GM12878 (cell line): ENCODE measurements at regions of chr15 and their contacts with region 1.

Region 1: DNA sequence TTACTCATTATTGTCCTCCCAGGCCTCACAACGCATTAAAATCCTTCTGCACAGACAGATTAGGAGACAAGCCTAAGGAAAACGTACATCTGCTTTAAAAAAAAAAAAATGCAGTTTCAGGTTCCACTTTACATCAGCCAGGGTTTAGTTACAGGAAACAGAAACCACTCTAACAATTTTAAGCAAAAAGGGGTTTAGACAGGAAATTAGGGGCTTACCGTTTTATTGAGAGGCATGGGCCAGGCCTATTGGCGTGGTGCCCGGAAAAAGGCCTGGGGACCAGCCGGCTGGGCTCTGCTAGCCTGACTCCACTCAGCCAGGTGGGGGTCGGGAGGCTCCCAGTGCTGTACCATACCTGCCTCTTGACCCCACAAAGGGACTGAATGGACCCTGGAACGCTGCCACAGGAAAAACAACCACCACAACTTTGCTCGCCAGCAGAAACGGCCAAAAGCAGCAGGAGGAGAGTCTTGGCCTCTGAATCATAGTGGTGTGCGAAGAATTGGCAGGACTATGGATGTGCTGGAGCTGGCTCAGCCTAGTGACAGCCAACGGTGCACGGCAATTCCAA is 124.3 kb downstream of the CHSY1 start:
- DNase-seq: peak; percentile 82
- ATAC-seq: peak; percentile 80
- H3K4me3 ChIP-seq: peak overlapping the region; percentile 44; the same call in 1 of the 2 replicates
- H3K27ac ChIP-seq: peak overlapping the region; percentile 95
- H3K4me1 ChIP-seq: peaks cover 45% of the 10 kb centered on the region
- H3K27me3 ChIP-seq: no peaks in the 10 kb centered on the region; a peak in 1 of 4 replicates
- CTCF ChIP-seq: no peak
- EP300 ChIP-seq: peak; percentile 60 to 85; a peak in 2 of 4 replicates
- POLR2A ChIP-seq: no peak
- RAD21 ChIP-seq: no peak

Region 2: GRCh38 chr15:101138913-101139880 is 11.6 kb after region 1 on chr15:
- CTCF ChIA-PET with region 1: interaction called, 12 read pairs
- POLR2A ChIA-PET with region 1: interaction called, 9 read pairs
- RAD21 ChIA-PET with region 1: interaction called, 9 read pairs
- SMC1A ChIA-PET with region 1: interaction called, 41 read pairs
- in situ Hi-C with region 1: no loop called
- intact Hi-C with region 1: no loop called
- DNase-seq: peak; percentile 48
- ATAC-seq: peak; percentile 82
- H3K4me3 ChIP-seq: no peak overlapping the region
- H3K27ac ChIP-seq: peak overlapping the region; percentile 4; the same call in 1 of the 2 replicates
- H3K4me1 ChIP-seq: peaks cover 58% of the 10 kb centered on the region
- H3K27me3 ChIP-seq: no peaks in the 10 kb centered on the region
- CTCF ChIP-seq: no peak
- EP300 ChIP-seq: peak; percentile 71 to 76
- POLR2A ChIP-seq: no peak
- RAD21 ChIP-seq: no peak

Region 3: GRCh38 chr15:101156509-101157159 is 29.0 kb after region 1 on chr15:
- CTCF ChIA-PET with region 1: interaction called, 4 read pairs
- POLR2A ChIA-PET with region 1: interaction called, 4 read pairs
- RAD21 ChIA-PET with region 1: interaction called, 6 read pairs
- SMC1A ChIA-PET with region 1: interaction called, 21 read pairs
- in situ Hi-C with region 1: no loop called
- intact Hi-C with region 1: loop called (anchors 2 kb)
- DNase-seq: peak; percentile 84
- ATAC-seq: peak; percentile 86
- H3K4me3 ChIP-seq: no peak overlapping the region
- H3K27ac ChIP-seq: peak overlapping the region; percentile 53
- H3K4me1 ChIP-seq: peaks cover 17% of the 10 kb centered on the region
- H3K27me3 ChIP-seq: no peaks in the 10 kb centered on the region
- CTCF ChIP-seq: no peak
- EP300 ChIP-seq: peak; percentile 40 to 75; a peak in 2 of 4 replicates
- POLR2A ChIP-seq: no peak
- RAD21 ChIP-seq: no peak

Region 4: GRCh38 chr15:101201406-101202174 is 74.0 kb after region 1 on chr15:
- CTCF ChIA-PET with region 1: interaction called, 10 read pairs
- POLR2A ChIA-PET with region 1: interaction called, 3 read pairs
- RAD21 ChIA-PET with region 1: interaction called, 4 read pairs
- SMC1A ChIA-PET with region 1: interaction called, 14 read pairs
- in situ Hi-C with region 1: no loop called
- intact Hi-C with region 1: no loop called
- DNase-seq: no peak
- ATAC-seq: peak; percentile 7; the same call in 1 of the 3 replicates
- H3K4me3 ChIP-seq: no peak overlapping the region
- H3K27ac ChIP-seq: peak overlapping the region; percentile 31; the same call in 1 of the 2 replicates
- H3K4me1 ChIP-seq: peaks cover 48% of the 10 kb centered on the region
- H3K27me3 ChIP-seq: no peaks in the 10 kb centered on the region
- CTCF ChIP-seq: no peak
- EP300 ChIP-seq: no peak
- POLR2A ChIP-seq: no peak
- RAD21 ChIP-seq: no peak

Region 5: DNA sequence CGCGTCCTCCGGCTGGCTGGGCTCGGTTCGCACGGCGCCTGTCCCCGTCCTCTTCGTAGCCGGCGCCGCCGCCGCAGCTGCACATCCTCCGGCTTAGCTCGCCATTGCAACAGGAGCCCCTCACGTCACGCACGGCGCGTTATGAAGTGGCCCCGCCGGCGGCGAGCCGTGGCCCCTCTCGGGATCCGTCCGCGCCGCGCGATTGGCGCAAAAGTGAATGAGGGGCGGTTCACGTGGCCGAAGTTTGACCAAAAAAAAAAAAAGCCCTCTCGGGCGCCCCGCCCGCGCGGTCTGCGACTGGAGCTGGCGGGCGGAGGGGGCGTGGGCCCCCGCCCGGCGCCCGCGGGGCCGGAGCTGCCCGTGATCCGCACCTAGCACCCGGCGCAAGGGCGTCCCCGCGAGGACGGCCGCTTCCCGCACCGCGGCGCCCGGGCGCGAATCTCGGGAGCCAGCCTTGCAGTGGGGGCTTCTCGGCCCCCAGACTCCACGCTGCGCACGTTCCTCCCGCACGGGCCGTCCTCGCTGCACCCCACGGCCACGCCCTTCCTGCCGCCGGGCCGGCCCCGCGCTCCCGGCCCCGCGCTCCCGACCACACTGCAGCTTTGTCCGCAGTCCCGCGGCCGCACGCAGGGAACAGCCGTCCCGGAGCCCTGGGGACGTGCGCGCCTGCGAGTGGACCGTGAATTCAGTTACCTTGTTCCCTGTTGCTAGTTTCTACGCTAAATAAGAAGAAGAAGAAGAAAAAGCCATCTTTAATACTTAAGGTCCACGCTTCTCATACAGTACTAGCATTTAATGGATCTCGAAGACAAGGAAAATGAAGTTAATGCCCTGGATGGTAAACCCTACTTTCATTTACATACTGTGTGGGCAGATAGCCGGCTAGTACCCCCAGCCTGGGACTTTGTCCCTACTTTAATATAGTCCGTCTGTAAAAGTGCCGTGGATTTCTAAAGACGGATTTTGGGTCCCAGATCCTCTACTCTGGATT is 124.5 kb after region 1 on chr15 and contains the start of gene CHSY1:
- CTCF ChIA-PET with region 1: interaction called, 60 read pairs
- POLR2A ChIA-PET with region 1: interaction called, 7 read pairs
- RAD21 ChIA-PET with region 1: interaction called, 26 read pairs
- SMC1A ChIA-PET with region 1: interaction called, 119 read pairs
- in situ Hi-C with region 1: no loop called
- intact Hi-C with region 1: loop called (anchors 2 kb)
- DNase-seq: peak; percentile 57
- ATAC-seq: peak; percentile 80
- H3K4me3 ChIP-seq: peak within 1 kb of the TSS; percentile 91
- H3K27ac ChIP-seq: peak within 1 kb of the TSS; percentile 43
- H3K4me1 ChIP-seq: no peaks in the 10 kb centered on the region; the same call in 1 of the 2 replicates
- H3K27me3 ChIP-seq: no peaks in the 10 kb centered on the region
- CTCF ChIP-seq: peak; percentile 17 to 47 (median 17); a peak in 3 of 6 replicates
- EP300 ChIP-seq: no peak
- POLR2A ChIP-seq: peak; percentile 87
- RAD21 ChIP-seq: peak; percentile 50; the same call in 1 of the 2 replicates
- polyA plus RNA-seq, gene CHSY1: 5.1 to 10.0 TPM